Breast epithelium (tissue), 4 donors: ENCODE measurements at regions of chr19 and their contacts with region 1.

Region 1: GRCh38 chr19:5695288-5696195 is 5.4 kb downstream of the RPL36 start:
- DNase-seq: no peak
- H3K4me3 ChIP-seq: no peak overlapping the region
- H3K27ac ChIP-seq: no peak overlapping the region
- H3K4me1 ChIP-seq: peaks cover 7 to 8% of the 10 kb centered on the region in 2 donors
- H3K27me3 ChIP-seq: no peaks in the 10 kb centered on the region
- CTCF ChIP-seq: no peak
- POLR2A ChIP-seq: no peak

Region 2: DNA sequence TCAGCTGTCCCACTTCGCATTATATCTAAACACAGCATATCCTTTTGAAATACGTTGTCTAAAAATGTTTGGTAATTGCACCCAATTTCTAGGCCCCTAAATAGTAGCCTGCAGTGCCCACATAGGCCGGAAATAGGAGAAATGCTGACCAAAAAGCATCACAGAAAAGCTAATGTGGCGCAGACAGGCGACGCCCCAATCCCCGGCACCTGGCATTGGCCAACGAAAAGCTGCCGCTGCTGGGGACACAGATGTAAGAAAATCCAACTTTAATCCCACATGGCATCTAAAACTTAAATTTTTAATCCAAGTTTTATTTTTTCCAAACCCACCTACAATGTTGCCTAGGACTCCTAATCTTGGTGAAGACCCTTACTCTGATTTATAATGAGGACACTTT is 77.0 kb before region 1 on chr19:
- intact Hi-C with region 1: loop called (anchors 2 kb)
- DNase-seq: no peak
- H3K4me3 ChIP-seq: no peak overlapping the region
- H3K27ac ChIP-seq: no peak overlapping the region
- H3K4me1 ChIP-seq: peaks cover 0 to 8% of the 10 kb centered on the region in 2 donors
- H3K27me3 ChIP-seq: no peaks in the 10 kb centered on the region
- CTCF ChIP-seq: no peak
- POLR2A ChIP-seq: no peak